Activated CD8-positive, alpha-beta T cell treated with anti-CD3 and anti-CD28 coated beads for 36 hours (primary cell): ENCODE measurements at regions of chr2 and their contacts with region 1.

Region 1: GRCh38 chr2:112626604-112627059 is 19.1 kb upstream of the SLC20A1 start:
- DNase-seq: peak; percentile 74
- ATAC-seq: peak; percentile 43
- H3K4me3 Mint-ChIP-seq: no peak overlapping the region
- H3K27ac Mint-ChIP-seq: no peak overlapping the region
- H3K4me1 Mint-ChIP-seq: peaks cover 56% of the 10 kb centered on the region
- H3K27me3 Mint-ChIP-seq: peaks cover 13% of the 10 kb centered on the region
- CTCF ChIP-seq: peak; percentile 92

Region 2: DNA sequence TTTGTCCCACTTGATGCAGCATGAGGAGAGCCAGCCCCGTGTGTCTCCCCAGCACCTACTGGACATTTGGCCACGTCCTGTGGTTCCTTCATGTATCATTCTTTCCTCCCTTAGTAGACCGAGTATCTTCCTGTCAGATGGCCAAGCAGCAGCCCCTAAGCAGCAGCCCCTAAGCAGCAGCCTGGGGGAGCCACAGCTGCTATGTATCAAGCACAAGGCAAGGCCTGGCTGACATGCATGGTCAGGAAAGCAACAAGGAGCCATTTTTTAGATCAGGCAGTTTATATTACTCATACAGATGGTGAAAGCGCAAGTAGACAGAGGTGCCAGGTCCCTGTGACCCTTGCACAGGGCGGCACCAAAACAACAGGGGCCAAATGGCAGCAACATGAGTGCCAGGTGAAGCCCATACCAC is 20.1 kb before region 1 on chr2:
- CTCF ChIA-PET with region 1: interaction called, 81 read pairs
- POLR2A ChIA-PET with region 1: interaction called, 3 read pairs
- intact Hi-C with region 1: no loop called
- DNase-seq: no peak
- ATAC-seq: no peak
- H3K4me3 Mint-ChIP-seq: no peak overlapping the region
- H3K27ac Mint-ChIP-seq: no peak overlapping the region
- H3K4me1 Mint-ChIP-seq: no peaks in the 10 kb centered on the region
- H3K27me3 Mint-ChIP-seq: no peaks in the 10 kb centered on the region
- CTCF ChIP-seq: no peak

Region 3: DNA sequence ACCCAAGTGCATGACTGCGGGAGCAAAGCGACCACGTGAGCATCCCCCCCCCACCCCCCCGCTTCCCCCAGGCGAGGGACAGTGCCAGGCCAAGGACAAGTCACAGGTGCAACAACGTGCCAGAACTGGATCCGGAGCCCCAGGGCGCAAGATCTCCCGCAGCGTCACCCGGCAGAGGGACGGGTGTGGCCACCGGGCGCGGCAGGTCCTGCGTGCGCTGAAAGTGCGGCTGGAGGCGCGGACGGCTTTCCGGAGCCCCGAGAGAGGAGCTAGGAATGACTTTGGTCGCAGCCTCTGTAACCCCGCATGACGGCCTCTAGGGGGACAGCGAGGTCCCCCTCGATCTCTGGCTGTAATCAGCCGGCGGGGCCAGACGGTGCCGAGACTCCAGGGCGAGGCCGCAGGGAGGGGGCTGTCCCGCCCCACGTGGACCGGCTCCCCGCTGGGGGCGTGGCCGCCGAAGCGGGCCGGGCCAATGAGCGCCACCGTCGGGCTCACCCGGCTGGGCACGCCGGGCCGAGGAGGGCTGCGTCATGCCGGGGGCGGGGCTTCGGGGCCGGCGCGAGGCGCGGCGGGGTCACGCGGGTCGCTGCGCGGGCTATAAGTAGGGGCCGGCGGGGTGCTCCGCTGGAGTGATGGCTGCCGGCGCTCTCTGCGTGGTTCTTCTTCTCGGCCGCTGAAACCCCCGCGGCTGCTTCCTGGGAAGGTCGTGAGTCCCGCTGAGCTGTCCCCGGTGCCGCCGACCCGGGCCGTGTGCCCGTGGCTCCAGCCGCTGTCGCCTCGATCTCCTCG is 18.9 kb after region 1 on chr2 and contains the start of gene SLC20A1:
- CTCF ChIA-PET with region 1: interaction called, 83 read pairs
- POLR2A ChIA-PET with region 1: interaction called, 40 read pairs
- intact Hi-C with region 1: no loop called
- DNase-seq: peak; percentile 95
- ATAC-seq: peak; percentile 93
- H3K4me3 Mint-ChIP-seq: peak within 1 kb of the TSS; percentile 95
- H3K27ac Mint-ChIP-seq: peak within 1 kb of the TSS; percentile 88
- H3K4me1 Mint-ChIP-seq: peaks cover 55% of the 10 kb centered on the region
- H3K27me3 Mint-ChIP-seq: no peaks in the 10 kb centered on the region
- CTCF ChIP-seq: no peak
- total RNA-seq, gene SLC20A1: 52.7 to 52.8 TPM

Region 4: DNA sequence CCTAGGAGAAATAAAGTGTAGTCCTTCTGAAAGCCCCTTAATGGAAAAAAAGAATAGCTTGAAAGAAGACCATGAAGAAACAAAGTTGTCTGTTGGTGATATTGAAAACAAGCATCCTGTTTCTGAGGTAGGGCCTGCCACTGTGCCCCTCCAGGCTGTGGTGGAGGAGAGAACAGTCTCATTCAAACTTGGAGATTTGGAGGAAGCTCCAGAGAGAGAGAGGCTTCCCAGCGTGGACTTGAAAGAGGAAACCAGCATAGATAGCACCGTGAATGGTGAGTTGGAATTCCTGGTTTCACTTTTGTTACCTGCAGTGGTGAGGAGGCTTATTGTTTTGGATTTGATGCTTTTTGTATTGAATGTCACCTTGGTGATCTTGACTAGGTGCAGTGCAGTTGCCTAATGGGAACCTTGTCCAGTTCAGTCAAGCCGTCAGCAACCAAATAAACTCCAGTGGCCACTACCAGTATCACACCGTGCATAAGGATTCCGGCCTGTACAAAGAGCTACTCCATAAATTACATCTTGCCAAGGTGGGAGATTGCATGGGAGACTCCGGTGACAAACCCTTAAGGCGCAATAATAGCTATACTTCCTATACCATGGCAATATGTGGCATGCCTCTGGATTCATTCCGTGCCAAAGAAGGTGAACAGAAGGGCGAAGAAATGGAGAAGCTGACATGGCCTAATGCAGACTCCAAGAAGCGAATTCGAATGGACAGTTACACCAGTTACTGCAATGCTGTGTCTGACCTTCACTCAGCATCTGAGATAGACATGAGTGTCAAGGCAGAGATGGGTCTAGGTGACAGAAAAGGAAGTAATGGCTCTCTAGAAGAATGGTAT is 32.4 kb after region 1 on chr2:
- CTCF ChIA-PET with region 1: interaction called, 15 read pairs
- POLR2A ChIA-PET with region 1: interaction called, 16 read pairs
- intact Hi-C with region 1: no loop called
- DNase-seq: no peak
- ATAC-seq: no peak
- H3K4me3 Mint-ChIP-seq: no peak overlapping the region
- H3K27ac Mint-ChIP-seq: peak overlapping the region; percentile 64
- H3K4me1 Mint-ChIP-seq: peaks cover 52% of the 10 kb centered on the region
- H3K27me3 Mint-ChIP-seq: no peaks in the 10 kb centered on the region
- CTCF ChIP-seq: no peak

Region 5: DNA sequence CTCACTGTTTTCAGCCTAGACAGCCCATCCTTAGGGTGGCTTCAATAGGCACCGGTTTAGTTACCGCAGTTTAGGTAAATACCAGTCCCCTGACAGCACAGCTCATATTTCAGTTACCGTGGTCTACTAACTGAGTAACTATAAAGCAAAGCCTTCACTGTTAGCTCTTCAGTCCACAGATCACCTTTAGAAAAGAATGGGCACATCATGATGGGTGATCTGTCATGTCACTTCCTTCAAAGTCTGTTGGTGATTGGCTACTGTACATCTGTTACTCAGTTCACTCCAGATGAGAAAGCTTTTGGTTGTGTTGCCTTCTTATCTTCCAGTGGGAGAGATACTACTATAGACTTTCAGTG is 40.1 kb after region 1 on chr2:
- CTCF ChIA-PET with region 1: interaction called, 15 read pairs
- POLR2A ChIA-PET with region 1: no interaction called
- intact Hi-C with region 1: no loop called
- DNase-seq: no peak
- ATAC-seq: no peak
- H3K4me3 Mint-ChIP-seq: no peak overlapping the region
- H3K27ac Mint-ChIP-seq: no peak overlapping the region
- H3K4me1 Mint-ChIP-seq: no peaks in the 10 kb centered on the region
- H3K27me3 Mint-ChIP-seq: no peaks in the 10 kb centered on the region
- CTCF ChIP-seq: no peak

Region 6: GRCh38 chr2:112692496-112692911 is 65.9 kb after region 1 on chr2:
- CTCF ChIA-PET with region 1: interaction called, 192 read pairs
- POLR2A ChIA-PET with region 1: no interaction called
- intact Hi-C with region 1: loop called (anchors 2 kb)
- DNase-seq: peak; percentile 83
- ATAC-seq: peak; percentile 91
- H3K4me3 Mint-ChIP-seq: no peak overlapping the region
- H3K27ac Mint-ChIP-seq: peak overlapping the region; percentile 59
- H3K4me1 Mint-ChIP-seq: peaks cover 29% of the 10 kb centered on the region
- H3K27me3 Mint-ChIP-seq: no peaks in the 10 kb centered on the region
- CTCF ChIP-seq: no peak

Region 7: DNA sequence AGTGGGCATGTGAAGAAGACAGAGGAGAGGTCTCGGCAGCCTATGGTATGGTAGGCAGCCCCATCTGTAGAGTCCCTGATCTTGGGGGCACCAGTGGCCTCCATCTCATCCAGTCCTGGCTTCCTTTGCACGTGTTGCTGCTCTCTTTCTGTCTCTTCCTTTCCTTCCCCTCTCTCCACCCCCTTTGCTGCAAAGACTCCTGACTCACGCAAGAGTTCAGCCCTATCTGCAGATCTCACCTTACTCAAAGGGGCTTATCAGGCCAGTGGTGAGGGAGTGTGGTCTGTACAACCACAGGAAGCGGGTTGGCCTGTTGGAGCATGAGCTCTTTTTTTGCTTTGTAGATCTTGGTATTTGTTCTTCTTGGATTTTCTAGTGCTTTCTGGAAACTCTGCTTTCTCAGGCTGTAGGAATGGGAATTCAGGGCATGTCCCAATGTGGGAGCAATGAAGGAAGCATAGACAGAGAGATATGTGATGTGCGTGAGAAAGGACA is 79.6 kb after region 1 on chr2:
- CTCF ChIA-PET with region 1: interaction called, 17 read pairs
- POLR2A ChIA-PET with region 1: interaction called, 9 read pairs
- intact Hi-C with region 1: no loop called
- DNase-seq: peak; percentile 89
- ATAC-seq: peak; percentile 96
- H3K4me3 Mint-ChIP-seq: no peak overlapping the region
- H3K27ac Mint-ChIP-seq: no peak overlapping the region
- H3K4me1 Mint-ChIP-seq: peaks cover 28% of the 10 kb centered on the region
- H3K27me3 Mint-ChIP-seq: peaks cover 20% of the 10 kb centered on the region
- CTCF ChIP-seq: no peak